ENCODE measurements at regions of chr5 and their contacts with region 1.

Region 1: DNA sequence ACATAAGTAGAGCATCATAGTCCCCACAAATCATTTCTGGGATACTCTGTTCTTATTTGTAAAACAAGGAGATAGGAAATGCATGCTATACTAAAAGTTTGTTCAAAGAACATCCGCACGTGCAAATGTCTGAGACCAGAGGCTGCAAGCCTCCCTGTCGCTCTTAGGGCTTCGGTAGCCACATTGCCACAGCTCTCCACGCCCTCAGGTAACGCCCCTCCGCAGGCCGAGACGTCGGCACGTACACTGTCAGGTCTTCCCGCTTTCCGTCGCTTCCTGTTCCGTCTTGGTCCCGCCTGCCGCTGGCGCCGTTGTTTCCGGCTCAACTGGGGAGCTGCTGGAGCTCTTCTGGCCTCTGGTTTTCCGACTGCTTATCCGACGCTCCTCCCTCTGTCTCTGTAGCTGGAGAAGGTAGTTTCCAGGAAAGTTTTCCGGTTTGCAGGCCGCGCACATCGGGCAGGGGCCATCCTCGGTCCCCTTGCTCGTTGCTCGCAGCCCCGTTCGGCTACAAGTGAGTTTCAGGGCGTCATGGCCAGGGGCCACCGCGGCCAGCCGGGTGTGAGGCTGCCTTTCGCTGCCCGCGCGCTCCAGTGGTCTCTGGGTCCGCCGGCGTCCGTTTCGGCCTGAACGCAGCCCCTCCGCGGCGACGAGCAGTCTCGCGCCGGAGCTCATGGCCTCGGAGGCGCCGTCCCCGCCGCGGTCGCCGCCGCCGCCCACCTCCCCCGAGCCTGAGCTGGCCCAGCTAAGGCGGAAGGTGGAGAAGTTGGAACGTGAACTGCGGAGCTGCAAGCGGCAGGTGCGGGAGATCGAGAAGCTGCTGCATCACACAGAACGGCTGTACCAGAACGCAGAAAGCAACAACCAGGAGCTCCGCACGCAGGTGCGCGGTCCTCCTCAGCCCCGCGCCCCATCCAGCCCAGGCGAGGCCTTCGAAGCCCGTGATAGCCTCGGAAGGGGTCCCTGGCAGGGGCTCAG is at the start of gene AGGF1:
- DNase-seq: peak; percentile 93
- H3K4me3 ChIP-seq: peak within 1 kb of the TSS; percentile 82
- H3K27ac ChIP-seq: peak within 1 kb of the TSS; percentile 43
- H3K4me1 ChIP-seq: peaks cover 17% of the 10 kb centered on the region
- CTCF ChIP-seq: no peak
- total RNA-seq, gene AGGF1: 18.5 and 19.3 TPM in 2 replicates

Region 2: DNA sequence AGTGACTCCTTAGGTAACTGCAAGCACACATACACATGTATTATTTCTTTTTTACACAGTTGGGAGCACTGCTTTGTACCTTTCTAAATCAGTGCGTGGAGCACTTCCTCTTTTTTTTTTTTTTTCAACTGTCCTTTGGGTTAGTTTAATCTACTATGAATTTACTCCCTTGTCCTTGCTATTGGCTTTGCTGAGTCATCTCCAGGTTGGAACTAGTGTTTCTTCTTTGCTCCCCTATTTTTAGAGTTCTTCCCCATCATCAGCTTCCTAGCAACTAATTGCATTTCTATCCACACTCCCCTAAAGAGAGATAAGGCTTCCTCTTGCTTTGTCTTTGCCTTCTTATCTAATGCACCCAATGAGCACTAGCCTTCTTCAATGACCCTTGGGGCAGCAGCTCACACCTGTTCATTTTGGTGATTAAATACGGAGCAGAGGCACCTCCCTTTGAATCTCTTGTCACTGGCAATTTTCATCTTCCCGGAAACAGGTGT is 156.2 kb before region 1 on chr5:
- CTCF ChIA-PET with region 1: interaction called, 4 read pairs
- POLR2A ChIA-PET with region 1: interaction called, 13 read pairs
- intact Hi-C with region 1: no loop called
- DNase-seq: peak; percentile 98
- H3K4me3 ChIP-seq: peak overlapping the region; percentile 85
- H3K27ac ChIP-seq: peak overlapping the region; percentile 100
- H3K4me1 ChIP-seq: peaks cover 58% of the 10 kb centered on the region
- CTCF ChIP-seq: no peak

Region 3: GRCh38 chr5:76901522-76901921 is 128.9 kb before region 1 on chr5:
- CTCF ChIA-PET with region 1: no interaction called
- POLR2A ChIA-PET with region 1: no interaction called
- intact Hi-C with region 1: no loop called
- DNase-seq: no peak
- H3K4me3 ChIP-seq: no peak overlapping the region
- H3K27ac ChIP-seq: no peak overlapping the region
- H3K4me1 ChIP-seq: no peaks in the 10 kb centered on the region
- CTCF ChIP-seq: no peak

Region 4: GRCh38 chr5:76926329-76927105 is 103.9 kb before region 1 on chr5:
- CTCF ChIA-PET with region 1: no interaction called
- POLR2A ChIA-PET with region 1: no interaction called
- intact Hi-C with region 1: no loop called
- DNase-seq: no peak
- H3K4me3 ChIP-seq: no peak overlapping the region
- H3K27ac ChIP-seq: no peak overlapping the region
- H3K4me1 ChIP-seq: no peaks in the 10 kb centered on the region
- CTCF ChIP-seq: no peak

Region 5: DNA sequence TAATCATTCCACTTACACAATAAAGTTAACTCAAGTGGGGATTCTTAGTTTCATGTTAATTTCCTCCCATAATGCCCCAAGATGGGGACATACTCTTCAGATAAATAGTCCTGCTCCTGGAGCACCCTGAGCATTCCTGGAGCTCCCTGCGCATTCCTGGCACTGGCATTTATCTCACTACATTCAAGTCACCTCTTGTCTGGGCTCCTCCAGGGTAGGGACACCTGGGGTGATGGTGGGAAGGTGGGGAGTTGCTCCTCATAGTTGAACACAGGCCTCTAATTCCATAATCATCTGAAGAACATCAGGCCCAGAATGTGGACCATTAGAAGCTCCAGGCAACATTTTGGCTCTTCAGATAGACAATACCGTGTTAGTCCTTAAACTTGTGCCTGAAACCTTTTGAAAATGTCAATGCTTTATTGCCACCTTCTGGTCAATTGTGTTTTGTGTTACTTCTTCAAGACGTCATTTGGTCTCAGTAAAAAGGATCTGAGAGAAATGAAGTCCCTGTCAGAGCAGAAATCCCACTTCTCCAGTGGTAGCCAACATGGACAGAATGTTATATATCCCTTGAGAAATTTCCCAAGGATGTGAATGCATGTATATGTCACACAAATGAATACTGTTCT is 14.3 kb before region 1 on chr5:
- CTCF ChIA-PET with region 1: no interaction called
- POLR2A ChIA-PET with region 1: interaction called, 11 read pairs
- intact Hi-C with region 1: no loop called
- DNase-seq: peak; percentile 77
- H3K4me3 ChIP-seq: no peak overlapping the region
- H3K27ac ChIP-seq: no peak overlapping the region
- H3K4me1 ChIP-seq: peaks cover 4% of the 10 kb centered on the region
- CTCF ChIP-seq: peak; percentile 81

Measured in OCI-LY7 (cell line).